Transverse colon (tissue), 4 donors: ENCODE measurements at regions of chr9 and their contacts with region 1.

Region 1: DNA sequence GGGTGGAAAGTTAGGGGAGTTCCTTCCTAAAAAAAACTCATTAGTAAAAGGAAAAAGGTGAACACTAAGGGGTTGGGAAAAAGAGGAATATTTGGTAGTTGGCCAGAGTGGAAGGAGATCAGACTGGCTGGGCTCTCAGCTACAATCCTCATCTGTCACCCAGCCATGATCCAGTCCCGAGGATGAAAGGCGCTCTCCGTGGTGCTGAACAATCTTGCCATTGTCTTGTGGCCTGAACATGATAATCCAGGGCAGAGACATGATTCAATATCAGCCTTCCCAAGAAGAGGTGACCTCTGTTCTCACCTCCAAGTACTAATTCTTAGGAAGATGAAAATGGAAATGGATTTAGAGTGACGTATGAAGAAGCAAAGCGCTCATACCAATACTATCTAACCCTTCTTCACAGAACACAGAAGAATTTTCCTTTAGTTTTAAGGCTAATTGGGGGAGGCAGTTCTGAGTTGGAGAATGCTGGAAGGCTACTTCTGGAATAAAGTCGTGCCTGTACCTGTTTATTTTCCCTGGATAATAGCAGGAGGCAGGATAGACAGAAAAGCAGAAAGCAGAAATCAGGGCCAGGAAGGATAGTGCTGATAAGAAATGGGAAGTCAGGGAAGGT is 36.6 kb upstream of the MYORG start:
- DNase-seq: peak; percentile 29
- H3K4me3 ChIP-seq: no peak overlapping the region
- H3K27ac ChIP-seq: no peak overlapping the region
- H3K4me1 ChIP-seq: no peaks in the 10 kb centered on the region
- H3K27me3 ChIP-seq: no peaks in the 10 kb centered on the region
- CTCF ChIP-seq: no peak
- EP300 ChIP-seq: no peak
- POLR2A ChIP-seq: no peak

Region 2: DNA sequence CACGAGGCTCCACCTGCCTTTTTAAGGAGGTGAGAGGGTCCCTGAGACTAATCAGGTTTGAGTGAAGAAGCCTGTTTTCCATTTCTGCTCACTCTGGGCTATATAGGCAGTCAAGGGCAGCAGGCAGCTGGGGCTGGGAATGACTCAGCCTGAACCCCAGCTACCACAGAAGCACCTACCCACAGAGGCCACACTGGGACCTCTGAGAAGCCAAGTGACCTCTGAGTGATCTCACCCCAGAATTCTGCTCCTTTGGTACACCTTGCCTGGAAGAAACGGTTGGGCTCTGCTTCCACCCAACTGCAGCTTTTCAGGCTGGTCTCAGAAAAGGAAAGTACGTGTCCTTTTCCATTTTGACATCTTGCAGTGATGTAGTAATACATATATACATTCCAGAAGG is 38.2 kb after region 1 on chr9:
- in situ Hi-C with region 1: no loop called
- intact Hi-C with region 1: loop called (anchors 1 kb)
- DNase-seq: no peak
- H3K4me3 ChIP-seq: no peak overlapping the region
- H3K27ac ChIP-seq: no peak overlapping the region
- H3K4me1 ChIP-seq: peaks cover 0 to 10% (median under 1%) of the 10 kb centered on the region in 4 donors
- H3K27me3 ChIP-seq: no peaks in the 10 kb centered on the region
- CTCF ChIP-seq: no peak
- EP300 ChIP-seq: no peak
- POLR2A ChIP-seq: no peak